PC-9 (cell line): ENCODE measurements at regions of chr4 and their contacts with region 1.

Region 1: GRCh38 chr4:3480528-3481112 is 17.5 kb downstream of the DOK7 start:
- DNase-seq: peak; percentile 52 to 85
- H3K4me3 ChIP-seq: no peak overlapping the region
- H3K27ac ChIP-seq: no peak overlapping the region
- H3K4me1 ChIP-seq: peaks cover 17% of the 10 kb centered on the region
- H3K27me3 ChIP-seq: no peaks in the 10 kb centered on the region
- CTCF ChIP-seq: peak; percentile 97

Region 2: GRCh38 chr4:2800691-2801596 is 679.7 kb before region 1 on chr4:
- CTCF ChIA-PET with region 1: no interaction called
- POLR2A ChIA-PET with region 1: no interaction called
- intact Hi-C with region 1: loop called (anchors 2 kb)
- DNase-seq: peak; percentile 51 to 73
- H3K4me3 ChIP-seq: no peak overlapping the region
- H3K27ac ChIP-seq: peak overlapping the region; percentile 51; the same call in 1 of the 2 replicates
- H3K4me1 ChIP-seq: peaks cover 77% of the 10 kb centered on the region
- H3K27me3 ChIP-seq: no peaks in the 10 kb centered on the region
- CTCF ChIP-seq: no peak

Region 3: GRCh38 chr4:3193531-3194203 is 287.0 kb before region 1 on chr4:
- CTCF ChIA-PET with region 1: no interaction called
- POLR2A ChIA-PET with region 1: no interaction called
- intact Hi-C with region 1: loop called (anchors 5 kb)
- DNase-seq: no peak
- H3K4me3 ChIP-seq: no peak overlapping the region
- H3K27ac ChIP-seq: no peak overlapping the region
- H3K4me1 ChIP-seq: no peaks in the 10 kb centered on the region
- H3K27me3 ChIP-seq: no peaks in the 10 kb centered on the region
- CTCF ChIP-seq: peak; percentile 50; the same call in 1 of the 2 replicates

Region 4: GRCh38 chr4:3346146-3346545 is 134.5 kb before region 1 on chr4:
- CTCF ChIA-PET with region 1: interaction called, 6 read pairs
- POLR2A ChIA-PET with region 1: no interaction called
- intact Hi-C with region 1: loop called (anchors 1 kb)
- DNase-seq: peak; percentile 35 to 61
- H3K4me3 ChIP-seq: no peak overlapping the region
- H3K27ac ChIP-seq: no peak overlapping the region
- H3K4me1 ChIP-seq: no peaks in the 10 kb centered on the region
- H3K27me3 ChIP-seq: no peaks in the 10 kb centered on the region
- CTCF ChIP-seq: peak; percentile 82

Region 5: GRCh38 chr4:3461478-3462291 is 18.9 kb before region 1 on chr4:
- CTCF ChIA-PET with region 1: interaction called, 11 read pairs
- POLR2A ChIA-PET with region 1: interaction called, 5 read pairs
- intact Hi-C with region 1: loop called (anchors 1 kb)
- DNase-seq: peak; percentile 89 to 96
- H3K4me3 ChIP-seq: no peak overlapping the region
- H3K27ac ChIP-seq: no peak overlapping the region
- H3K4me1 ChIP-seq: peaks cover 21% of the 10 kb centered on the region
- H3K27me3 ChIP-seq: no peaks in the 10 kb centered on the region; the same call in 1 of the 2 replicates
- CTCF ChIP-seq: no peak